ENCODE measurements at regions of chr3 and their contacts with region 1.

Region 1: DNA sequence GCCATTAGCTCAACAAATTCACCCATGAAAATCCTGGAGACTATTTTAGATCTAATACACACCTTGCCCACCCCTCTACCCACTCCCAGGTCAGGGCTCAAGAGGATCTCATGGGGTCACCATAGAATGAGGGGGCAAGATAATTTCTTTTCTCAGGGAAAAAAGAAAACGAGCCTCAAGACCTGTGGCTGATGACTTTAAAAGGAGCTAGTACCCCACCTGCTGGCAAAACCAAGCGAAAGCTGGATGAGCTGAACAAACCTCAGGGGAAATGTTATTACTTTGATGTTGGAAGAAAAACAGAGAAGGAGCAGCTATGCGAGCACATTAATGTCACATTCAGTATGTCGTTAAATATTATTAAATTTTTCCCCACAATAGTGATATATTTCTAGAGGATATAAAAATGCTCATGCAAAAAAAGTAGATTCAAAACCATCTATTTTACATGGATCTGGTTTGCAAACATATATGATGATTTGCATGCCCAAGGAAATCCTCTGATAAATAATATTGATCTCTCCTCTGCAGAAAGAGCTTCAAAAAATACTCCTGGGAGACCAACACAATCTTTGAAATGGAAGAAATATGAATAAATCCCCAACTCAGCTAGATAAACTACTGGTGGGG is 37.7 kb downstream of the PLD1 start:
- DNase-seq: peak in 41 of 42 donors; percentile 28 to 89 (median 74)

Region 2: GRCh38 chr3:170953229-170953628 is 819.3 kb before region 1 on chr3:
- intact Hi-C with region 1: loop called (anchors 10 kb)
- DNase-seq: peak in 16 of 42 donors; percentile 2 to 50 (median 18)

Region 3: DNA sequence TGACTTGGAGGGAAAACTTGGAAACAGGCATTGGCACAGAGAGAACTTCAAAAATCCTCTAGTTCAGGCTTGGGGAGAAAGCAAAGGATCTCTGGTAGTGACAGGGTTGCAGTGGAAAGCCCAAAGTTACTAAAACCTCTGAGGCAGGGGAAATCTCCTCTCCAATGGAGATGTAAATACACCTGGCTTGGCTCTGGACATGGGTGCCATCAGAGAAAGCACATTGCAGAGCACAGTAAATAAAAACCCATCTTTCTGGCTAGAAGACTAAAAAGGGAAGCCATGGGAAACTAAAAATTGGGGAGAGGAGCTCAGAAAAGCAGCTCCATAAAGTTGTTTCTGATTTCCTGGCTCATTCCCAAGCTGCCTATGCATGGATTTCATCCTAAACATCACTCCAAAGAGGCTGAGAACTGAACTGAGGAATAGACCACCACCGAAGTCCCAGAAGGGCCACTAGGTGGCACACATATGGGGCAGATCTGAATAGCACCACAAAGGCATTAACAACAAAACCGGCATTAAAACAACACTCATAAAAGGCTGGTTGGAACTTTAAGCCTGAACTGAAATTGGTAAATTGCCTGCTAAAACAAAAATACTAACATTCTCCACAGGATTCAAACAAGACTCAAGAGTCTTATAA is 68.7 kb before region 1 on chr3:
- intact Hi-C with region 1: loop called (anchors 10 kb)
- DNase-seq: peak in 18 of 42 donors; percentile 5 to 69 (median 30)

Region 4: GRCh38 chr3:172002512-172003078 is 230.1 kb after region 1 on chr3:
- intact Hi-C with region 1: no loop called
- DNase-seq: no peak